Activated T-helper 1 cell treated with anti-CD3 and anti-CD28 coated beads, Interleukin-12 subunit alpha, Interleukin-12 subunit beta, Interleukin-2, Interleukin-4 antibody, amounts not matched to agents 30 ng/mL and 10 ng/mL and 1 ng/mL, durations not matched to agents 14 hours and 24 hours and 36 hours (primary cell): ENCODE measurements at regions of chr16 and their contacts with region 1.

Region 1: GRCh38 chr16:47141773-47142485 is 1.8 kb downstream of the NETO2 start:
- DNase-seq: peak; percentile 79
- H3K4me3 Mint-ChIP-seq: peak overlapping the region; percentile 90
- H3K27ac Mint-ChIP-seq: peak overlapping the region; percentile 53
- H3K4me1 Mint-ChIP-seq: peaks cover 50% of the 10 kb centered on the region
- H3K27me3 Mint-ChIP-seq: peaks cover 16% of the 10 kb centered on the region

Region 2: DNA sequence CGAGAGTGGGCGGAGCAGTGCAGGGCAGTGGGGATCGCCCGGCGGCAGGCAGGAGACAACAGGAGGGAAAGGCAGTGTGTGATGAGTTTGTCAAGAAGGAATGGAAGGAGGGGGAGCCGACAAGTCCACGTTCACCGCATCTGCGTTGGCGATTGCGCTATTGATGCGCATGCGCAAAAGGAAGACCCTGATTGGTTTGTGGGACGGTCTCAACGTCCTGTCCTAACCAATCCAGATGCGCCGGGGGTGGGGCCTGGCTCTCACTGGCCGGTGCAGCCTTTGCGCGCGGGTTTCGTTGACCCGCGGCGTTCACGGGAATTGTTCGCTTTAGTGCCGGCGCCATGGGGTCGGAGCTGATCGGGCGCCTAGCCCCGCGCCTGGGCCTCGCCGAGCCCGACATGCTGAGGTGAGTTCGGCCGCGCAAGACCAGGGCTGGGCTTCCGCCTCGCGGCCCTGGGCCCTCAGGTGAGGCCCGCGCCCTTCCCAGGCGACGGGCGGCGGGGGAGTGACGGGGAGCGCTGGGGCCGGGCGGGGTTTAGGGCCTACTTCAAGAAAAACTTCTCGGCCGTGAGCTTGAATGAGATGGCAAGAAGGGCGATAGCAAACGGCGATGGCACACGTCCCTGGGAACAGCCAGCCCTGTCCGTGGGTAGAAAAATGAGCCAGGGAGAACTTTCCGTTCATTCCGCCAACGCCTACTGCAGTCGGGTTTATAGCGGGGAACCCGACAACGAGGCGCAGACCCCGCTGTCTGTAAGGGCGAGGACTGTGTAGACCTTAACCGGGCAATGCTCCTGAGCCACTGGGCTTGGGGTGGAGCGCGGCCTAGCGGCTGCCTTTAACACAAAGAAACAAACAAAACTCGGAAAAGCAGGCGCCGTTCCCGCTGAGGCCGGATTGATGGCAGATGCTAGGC is 452.3 kb before region 1 on chr16 and contains the start of gene ORC6:
- intact Hi-C with region 1: loop called (anchors 10 kb)
- DNase-seq: peak; percentile 95
- H3K4me3 Mint-ChIP-seq: no peak within 1 kb of the TSS
- H3K27ac Mint-ChIP-seq: no peak within 1 kb of the TSS
- H3K4me1 Mint-ChIP-seq: peaks cover 29% of the 10 kb centered on the region
- H3K27me3 Mint-ChIP-seq: no peaks in the 10 kb centered on the region
- total RNA-seq, gene ORC6: 68.2 and 69.1 TPM in 2 replicates

Region 3: DNA sequence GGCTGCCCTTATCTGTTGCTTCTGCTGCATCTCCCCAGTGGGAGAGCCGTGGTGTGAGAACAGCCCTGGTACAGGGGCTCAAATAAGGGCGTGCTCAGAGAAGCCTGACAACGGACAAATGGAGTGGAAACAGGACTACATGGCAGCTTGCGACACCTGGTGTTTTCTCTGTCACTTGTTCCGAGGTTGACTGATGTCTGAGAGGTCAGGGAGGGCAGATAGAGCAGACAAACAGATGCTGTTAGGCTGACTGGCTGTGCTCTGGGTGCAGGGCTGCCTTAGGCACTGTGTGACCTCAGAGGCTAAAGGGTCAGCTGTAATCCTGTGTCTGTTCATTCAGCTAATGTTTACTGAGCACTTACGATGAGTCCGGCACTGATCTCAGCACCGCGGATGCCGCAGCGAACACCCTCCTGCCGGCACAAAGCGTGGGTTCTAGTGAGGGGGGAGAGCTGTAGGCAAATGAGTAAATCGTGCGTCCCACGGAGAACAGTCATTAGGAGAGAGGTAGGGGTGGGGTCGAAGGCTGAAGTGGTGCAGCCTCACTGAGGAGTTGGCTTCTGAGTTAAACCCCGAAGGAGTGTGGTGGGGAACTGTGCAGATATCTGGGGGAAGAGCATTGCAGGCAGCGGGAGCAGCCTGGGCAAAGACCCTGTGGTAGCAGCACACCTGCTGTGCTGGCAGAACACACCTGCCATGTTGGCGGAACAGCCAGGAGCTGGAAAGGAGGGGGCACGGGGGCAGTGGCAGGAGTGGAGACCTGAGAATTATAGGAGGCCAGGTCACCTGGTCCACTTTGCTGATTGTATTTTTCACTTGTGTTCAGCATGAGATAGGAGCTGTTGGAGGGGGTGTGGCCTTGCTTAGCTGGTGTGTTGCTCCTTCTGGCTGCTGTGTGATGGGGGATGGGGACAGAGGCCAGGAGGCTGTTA is 222.8 kb before region 1 on chr16:
- intact Hi-C with region 1: no loop called
- DNase-seq: no peak
- H3K4me3 Mint-ChIP-seq: no peak overlapping the region
- H3K27ac Mint-ChIP-seq: no peak overlapping the region
- H3K4me1 Mint-ChIP-seq: no peaks in the 10 kb centered on the region
- H3K27me3 Mint-ChIP-seq: no peaks in the 10 kb centered on the region

Region 4: DNA sequence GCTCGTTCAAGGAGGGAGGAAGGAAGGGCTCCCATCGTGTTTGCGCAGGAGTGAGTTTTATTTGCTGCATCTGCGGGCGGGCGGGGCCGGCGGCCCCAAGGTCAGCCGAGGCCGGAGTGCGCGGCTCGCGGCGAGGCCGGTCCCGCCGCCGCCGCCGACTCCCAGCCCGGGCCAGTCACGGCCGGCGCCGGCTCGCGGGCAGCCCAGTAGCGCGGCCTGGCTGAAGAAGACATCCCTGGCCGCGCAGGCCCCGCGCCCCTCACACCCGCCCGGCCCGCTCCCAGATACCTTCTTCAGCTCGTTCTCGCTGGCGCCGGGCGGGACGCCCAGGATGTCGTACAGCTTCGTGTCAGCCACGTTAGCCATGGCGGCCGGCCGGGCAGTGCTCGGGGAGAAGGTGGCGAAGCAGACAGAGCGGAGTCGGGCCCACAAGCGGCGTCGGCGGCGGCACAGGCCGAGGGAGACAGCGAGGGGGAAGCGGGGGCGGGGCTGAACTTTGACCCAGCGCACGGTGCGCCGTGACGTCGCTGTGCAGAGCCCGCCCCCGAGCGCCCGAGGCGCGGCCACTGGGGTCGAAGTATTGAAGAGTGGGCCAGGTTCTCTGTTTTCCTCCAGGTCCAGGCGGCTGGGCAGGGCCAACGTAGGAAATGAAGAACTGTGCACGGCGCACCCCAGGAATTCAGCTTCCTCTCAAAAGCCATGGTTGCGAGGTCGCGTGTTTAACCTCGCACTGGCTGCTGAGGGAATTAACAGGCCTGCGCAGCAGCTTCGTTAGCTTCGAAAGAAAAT is 168.5 kb before region 1 on chr16 and contains the start of gene DNAJA2:
- intact Hi-C with region 1: loop called (anchors 1 kb)
- DNase-seq: peak; percentile 86
- H3K4me3 Mint-ChIP-seq: peak within 1 kb of the TSS; percentile 97
- H3K27ac Mint-ChIP-seq: peak within 1 kb of the TSS; percentile 96
- H3K4me1 Mint-ChIP-seq: peaks cover 47% of the 10 kb centered on the region
- H3K27me3 Mint-ChIP-seq: no peaks in the 10 kb centered on the region
- total RNA-seq, gene DNAJA2: 83.6 and 86.3 TPM in 2 replicates

Region 5: DNA sequence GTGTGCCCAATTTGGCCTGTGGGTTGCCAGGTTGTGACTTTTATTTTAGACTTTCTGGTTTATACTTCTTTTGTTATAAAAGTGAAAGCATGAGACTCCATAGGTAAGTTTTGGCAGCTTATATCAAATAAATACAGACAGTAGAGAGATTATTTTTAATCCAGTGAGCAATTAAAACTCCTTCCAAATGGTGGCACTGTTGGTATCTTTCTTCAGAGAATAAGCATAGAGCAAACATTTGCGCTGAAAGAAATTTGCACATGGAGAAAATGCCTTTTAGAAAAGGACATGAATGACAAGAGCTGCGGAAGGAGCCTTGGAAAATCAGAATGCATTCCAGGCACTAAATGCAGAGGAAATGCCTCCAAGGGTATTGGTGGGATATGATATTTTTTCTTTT is 122.4 kb before region 1 on chr16:
- intact Hi-C with region 1: no loop called
- DNase-seq: no peak
- H3K4me3 Mint-ChIP-seq: no peak overlapping the region
- H3K27ac Mint-ChIP-seq: no peak overlapping the region
- H3K4me1 Mint-ChIP-seq: peaks cover 23% of the 10 kb centered on the region
- H3K27me3 Mint-ChIP-seq: peaks cover 4% of the 10 kb centered on the region

Region 6: DNA sequence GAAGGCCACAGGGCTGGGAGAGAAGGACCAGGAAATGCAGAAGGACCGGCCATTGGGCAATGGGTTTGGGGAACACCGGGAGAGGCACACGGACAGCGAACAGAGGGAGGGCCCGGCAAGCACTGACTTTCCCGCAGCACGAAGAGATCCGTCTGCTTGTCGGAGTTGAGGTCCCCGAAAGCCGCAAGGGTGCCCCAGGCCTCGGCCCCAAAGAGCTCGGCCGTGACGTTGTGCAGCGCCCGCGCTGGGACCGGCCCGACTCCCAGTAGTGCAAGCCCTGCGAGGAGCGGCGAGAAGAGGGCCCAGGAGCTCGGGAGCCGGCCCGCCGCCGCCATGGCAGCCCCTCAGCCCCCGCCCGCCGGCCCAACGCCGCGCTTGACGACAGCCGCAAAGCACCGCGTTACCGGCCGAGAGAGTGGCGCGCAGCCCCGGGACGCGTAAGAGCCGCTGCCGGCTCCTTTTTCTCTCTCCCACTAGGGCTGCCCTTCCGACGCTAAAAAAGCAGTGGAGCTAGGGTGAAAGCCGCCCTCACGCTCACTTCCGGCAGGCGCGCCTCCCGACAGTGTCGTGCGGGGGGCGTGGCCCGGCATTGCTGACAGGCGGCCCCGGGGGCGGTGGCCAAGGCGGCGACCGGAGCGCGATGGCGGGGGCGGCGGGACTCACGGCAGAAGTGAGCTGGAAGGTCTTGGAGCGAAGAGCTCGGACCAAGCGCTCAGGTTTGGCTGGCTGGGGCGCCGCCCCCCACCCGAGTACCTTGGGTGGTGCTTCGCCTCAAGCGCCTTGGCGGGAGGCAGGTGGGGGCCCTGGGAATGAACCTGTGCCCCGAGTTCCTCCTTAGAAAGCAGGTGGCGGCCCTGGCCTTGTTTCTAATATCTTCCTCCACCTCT is 319.0 kb after region 1 on chr16 and contains the starts of genes ITFG1 and PHKB:
- intact Hi-C with region 1: loop called (anchors 1 kb)
- DNase-seq: peak; percentile 95
- H3K4me3 Mint-ChIP-seq: peak within 1 kb of the TSS; percentile 90
- H3K27ac Mint-ChIP-seq: peak within 1 kb of the TSS; percentile 97
- H3K4me1 Mint-ChIP-seq: peaks cover 51% of the 10 kb centered on the region
- H3K27me3 Mint-ChIP-seq: no peaks in the 10 kb centered on the region
- total RNA-seq, gene ITFG1: 25.4 and 27.6 TPM in 2 replicates
- total RNA-seq, gene PHKB: 24.4 and 26.6 TPM in 2 replicates

Region 7: DNA sequence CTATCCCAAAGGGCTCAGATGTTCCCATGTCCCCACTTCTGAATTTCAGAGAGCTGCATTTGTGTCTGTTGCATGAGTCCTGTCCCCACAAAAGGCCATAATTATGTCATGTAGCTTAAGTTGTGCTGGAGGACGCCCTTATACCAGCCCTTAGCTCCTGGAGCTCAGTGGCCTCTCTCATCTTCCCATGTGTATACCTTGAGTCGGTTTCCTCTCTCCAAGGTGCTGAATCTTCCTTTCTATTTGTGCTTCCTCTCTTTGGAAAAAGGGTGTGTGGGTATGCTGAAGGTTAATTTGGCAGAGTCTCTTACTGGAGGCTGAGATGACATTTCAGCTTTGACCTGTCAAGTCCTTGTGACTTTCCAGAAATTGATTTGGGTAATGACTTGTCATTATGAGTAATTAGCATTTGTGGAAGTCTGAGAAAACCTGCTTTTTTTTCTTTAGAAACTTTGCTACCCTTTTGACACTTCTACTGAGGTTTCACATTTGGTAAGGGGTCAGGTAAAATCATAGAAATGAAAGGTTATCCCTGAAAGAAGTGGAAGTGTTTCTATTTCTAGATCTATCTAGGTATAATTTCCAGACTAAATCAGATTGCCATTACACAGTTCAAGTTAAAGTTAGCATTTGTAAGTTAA is 828.5 kb after region 1 on chr16:
- intact Hi-C with region 1: loop called (anchors 10 kb)
- DNase-seq: no peak
- H3K4me3 Mint-ChIP-seq: no peak overlapping the region
- H3K27ac Mint-ChIP-seq: no peak overlapping the region
- H3K4me1 Mint-ChIP-seq: no peaks in the 10 kb centered on the region
- H3K27me3 Mint-ChIP-seq: no peaks in the 10 kb centered on the region

Region 8: DNA sequence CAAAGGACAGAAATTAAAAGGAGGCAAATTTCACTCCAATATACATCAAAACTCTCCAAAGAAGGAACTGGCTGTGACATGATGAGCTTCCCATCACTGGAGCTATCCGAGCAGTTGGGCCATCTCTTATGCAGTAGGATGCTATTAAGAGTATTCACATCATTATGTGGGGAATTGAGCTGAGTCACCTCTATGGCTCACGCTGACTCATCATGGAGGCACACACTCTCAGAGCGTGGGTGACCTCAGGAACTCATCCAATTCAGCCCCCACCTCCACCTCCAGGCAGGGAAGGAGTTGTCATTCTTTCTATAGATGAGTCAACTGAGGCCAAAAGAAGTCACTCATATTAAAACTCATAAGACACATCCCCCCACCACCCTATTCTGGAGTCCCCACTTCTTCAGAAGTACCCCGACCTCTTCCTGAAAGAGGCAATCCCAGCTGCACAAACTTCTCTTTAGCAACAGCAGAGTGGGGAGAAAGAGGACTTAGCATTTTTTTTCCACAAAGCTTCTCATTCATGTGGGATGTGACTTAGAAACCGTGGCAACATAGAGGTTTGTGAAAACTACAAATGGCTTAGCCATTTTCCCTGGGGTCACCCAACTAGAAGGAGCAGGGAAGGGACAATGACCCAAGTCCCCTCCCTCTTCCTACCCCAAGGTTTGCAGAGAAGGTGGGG is 981.3 kb after region 1 on chr16:
- intact Hi-C with region 1: loop called (anchors 2 kb)
- DNase-seq: peak; percentile 13
- H3K4me3 Mint-ChIP-seq: no peak overlapping the region
- H3K27ac Mint-ChIP-seq: peak overlapping the region; percentile 36
- H3K4me1 Mint-ChIP-seq: peaks cover 40% of the 10 kb centered on the region
- H3K27me3 Mint-ChIP-seq: no peaks in the 10 kb centered on the region

Region 9: GRCh38 chr16:48609652-48610029 is 1467.7 kb after region 1 on chr16:
- intact Hi-C with region 1: loop called (anchors 5 kb)
- DNase-seq: no peak
- H3K4me3 Mint-ChIP-seq: no peak overlapping the region
- H3K27ac Mint-ChIP-seq: peak overlapping the region; percentile 93
- H3K4me1 Mint-ChIP-seq: peaks cover 50% of the 10 kb centered on the region
- H3K27me3 Mint-ChIP-seq: no peaks in the 10 kb centered on the region